Breast epithelium (tissue), 4 donors: ENCODE measurements at regions of chr1 and their contacts with region 1.

Region 1: DNA sequence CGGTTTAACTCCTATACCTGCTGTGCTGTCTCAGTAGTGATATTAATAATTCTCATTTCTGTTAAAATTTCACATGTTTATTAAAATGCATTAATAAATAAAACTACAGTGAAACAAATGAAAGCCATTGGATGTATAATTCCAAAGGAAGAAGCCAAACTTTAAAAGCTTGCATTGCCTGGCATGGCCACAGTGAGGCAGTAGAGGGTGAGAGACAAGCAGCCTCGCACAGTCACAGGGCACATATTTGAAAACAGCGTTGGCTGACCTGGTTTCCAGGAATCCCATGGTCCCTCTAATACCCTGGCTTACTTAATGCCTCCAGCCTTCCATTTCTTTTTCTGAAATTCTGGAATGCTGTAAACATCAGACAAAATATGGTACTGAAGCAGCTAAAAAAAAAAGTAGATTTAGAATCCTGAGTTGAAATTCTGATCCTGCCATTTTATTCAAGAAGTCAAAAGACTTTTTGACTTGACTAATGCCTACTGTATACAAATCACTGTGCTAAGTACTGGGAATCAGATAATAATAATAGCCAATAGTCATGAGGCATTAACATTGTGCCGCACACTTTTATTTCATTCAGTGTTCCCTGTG is 6.7 kb upstream of the RNASEL start:
- DNase-seq: peak; percentile 41 to 67
- H3K4me3 ChIP-seq: no peak overlapping the region
- H3K27ac ChIP-seq: peak overlapping the region in 1 of 2 donors; percentile 4
- H3K4me1 ChIP-seq: no peaks in the 10 kb centered on the region
- H3K27me3 ChIP-seq: no peaks in the 10 kb centered on the region
- CTCF ChIP-seq: peak; percentile 56 to 68 (median 68)
- POLR2A ChIP-seq: no peak

Region 2: DNA sequence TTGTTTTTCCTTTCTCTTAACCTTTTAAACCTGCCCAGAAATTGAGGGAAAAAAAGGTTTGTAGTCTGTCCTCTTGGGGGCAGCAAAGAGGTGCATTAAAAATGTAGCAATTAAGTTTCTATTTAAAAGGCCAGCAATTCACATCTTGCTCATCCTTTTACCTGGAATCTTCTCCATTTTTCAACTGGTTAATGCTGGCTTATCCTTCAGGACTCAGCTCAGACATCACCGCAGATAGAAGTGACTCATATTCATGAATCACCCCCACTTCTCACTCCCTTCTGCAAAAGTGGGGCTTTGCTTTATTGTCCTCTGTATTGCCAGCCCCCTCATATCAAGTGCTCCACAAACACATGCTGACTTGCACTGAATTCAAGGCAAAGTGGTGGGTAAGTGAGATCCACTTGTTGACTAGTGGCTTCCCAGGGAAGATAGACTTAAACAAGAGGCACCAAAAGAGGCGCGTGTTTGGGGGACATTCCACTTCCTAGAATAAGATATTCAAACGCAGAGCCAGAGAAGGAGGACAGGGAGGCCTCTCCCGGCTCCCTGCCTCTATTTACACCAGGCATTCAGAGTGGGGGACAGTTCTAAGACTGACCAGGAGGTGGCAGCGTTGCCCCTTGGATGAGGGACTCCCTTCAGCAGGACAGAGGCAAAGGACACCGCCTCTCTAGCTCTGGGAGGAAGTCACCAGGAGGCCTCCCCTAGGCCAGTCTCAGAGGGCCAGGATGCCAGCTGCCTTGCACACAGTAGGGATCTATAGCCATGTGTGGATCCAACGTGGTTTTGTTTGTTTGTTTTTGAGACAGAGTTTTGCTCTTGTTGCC is 511.0 kb before region 1 on chr1:
- intact Hi-C with region 1: loop called (anchors 10 kb)
- DNase-seq: peak; percentile 86 to 88
- H3K4me3 ChIP-seq: peak overlapping the region in 1 of 3 donors; percentile 32
- H3K27ac ChIP-seq: peak overlapping the region; percentile 66 to 78
- H3K4me1 ChIP-seq: no peaks in the 10 kb centered on the region
- H3K27me3 ChIP-seq: no peaks in the 10 kb centered on the region
- CTCF ChIP-seq: peak; percentile 70 to 97 (median 95)
- POLR2A ChIP-seq: no peak